A673 (cell line): ENCODE measurements at regions of chr5 and their contacts with region 1.

Region 1: GRCh38 chr5:93607367-93608258 is 24.6 kb downstream of the NR2F1 start:
- DNase-seq: peak; percentile 65
- H3K4me3 ChIP-seq: no peak overlapping the region
- H3K27ac ChIP-seq: no peak overlapping the region
- H3K4me1 ChIP-seq: no peaks in the 10 kb centered on the region
- H3K27me3 ChIP-seq: peaks cover 95% of the 10 kb centered on the region
- CTCF ChIP-seq: peak; percentile 70

Region 2: DNA sequence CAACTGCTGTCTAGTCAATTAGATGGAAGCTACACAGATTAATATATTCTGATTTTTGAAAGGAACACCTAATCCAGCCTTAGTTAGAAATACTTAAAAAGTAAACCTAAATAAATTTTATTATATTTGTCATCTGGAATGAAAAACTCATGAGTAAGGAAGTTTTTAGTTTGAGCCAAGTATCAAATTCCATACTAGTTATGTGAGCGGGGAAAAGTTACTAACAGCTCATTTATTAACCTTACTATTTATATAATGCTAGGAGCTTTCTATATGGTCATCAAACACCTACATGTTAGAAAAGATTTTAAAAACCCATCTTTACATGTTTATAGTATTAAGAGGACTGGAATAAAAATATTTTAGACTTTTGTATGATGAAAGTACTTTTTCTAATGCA is 175.4 kb after region 1 on chr5:
- CTCF ChIA-PET with region 1: no interaction called
- POLR2A ChIA-PET with region 1: no interaction called
- intact Hi-C with region 1: loop called (anchors 5 kb)
- DNase-seq: no peak
- H3K4me3 ChIP-seq: no peak overlapping the region
- H3K27ac ChIP-seq: no peak overlapping the region
- H3K4me1 ChIP-seq: no peaks in the 10 kb centered on the region
- H3K27me3 ChIP-seq: no peaks in the 10 kb centered on the region
- CTCF ChIP-seq: no peak

Region 3: GRCh38 chr5:93800988-93801811 is 193.6 kb after region 1 on chr5:
- CTCF ChIA-PET with region 1: interaction called, 3 read pairs
- POLR2A ChIA-PET with region 1: no interaction called
- intact Hi-C with region 1: loop called (anchors 5 kb)
- DNase-seq: peak; percentile 63
- H3K4me3 ChIP-seq: no peak overlapping the region
- H3K27ac ChIP-seq: no peak overlapping the region
- H3K4me1 ChIP-seq: peaks cover 3% of the 10 kb centered on the region
- H3K27me3 ChIP-seq: no peaks in the 10 kb centered on the region
- CTCF ChIP-seq: peak; percentile 77